SK-N-SH (cell line): ENCODE measurements at regions of chr19 and their contacts with region 1.

Region 1: DNA sequence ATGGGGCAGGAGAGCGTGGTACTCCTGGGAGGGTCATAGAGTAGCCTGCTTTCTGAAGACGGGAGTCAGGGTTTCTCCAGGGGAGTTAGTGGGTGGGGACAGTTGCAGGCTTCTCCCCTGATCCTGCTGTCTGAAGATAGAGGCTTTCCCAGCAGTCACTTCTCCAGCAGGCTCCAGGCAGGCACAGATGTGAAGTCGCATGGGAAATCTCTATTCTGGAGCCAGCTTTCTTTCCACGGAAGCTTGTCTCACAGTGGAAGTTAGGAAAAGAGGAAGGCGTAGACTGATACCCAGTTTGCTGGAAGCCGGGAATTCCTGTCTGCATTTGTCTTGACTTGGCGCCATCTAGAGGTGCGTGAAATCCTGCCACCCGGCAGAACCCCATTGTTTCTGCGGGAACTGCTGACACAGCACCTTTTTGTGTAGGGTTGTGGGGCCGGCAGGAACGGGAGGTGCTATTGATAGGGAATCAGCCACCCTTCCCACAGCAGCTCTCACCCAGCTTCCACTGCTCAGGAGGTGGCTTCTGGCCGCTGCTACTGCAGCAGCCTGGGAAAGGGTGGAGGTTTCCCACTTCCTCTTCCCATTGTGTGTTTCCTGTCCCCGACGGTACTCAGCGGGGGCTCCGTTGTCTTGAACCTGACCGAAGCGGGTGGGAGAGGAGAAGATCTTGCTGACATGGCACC is 28.5 kb upstream of the NPAS1 start:
- DNase-seq: peak; percentile 85
- H3K4me3 ChIP-seq: no peak overlapping the region; a peak in 1 of 4 replicates
- H3K27ac ChIP-seq: peak overlapping the region; percentile 32 to 34; a peak in 2 of 4 replicates
- H3K4me1 ChIP-seq: peaks cover 6 to 8% of the 10 kb centered on the region in 2 experiments; a peak in 3 of 4 replicates
- H3K27me3 ChIP-seq: no peaks in the 10 kb centered on the region
- CTCF ChIP-seq: peak; percentile 89
- EP300 ChIP-seq: no peak; a peak in 1 of 4 replicates
- RAD21 ChIP-seq: peak; percentile 96

Region 2: GRCh38 chr19:46850228-46851203 is 140.6 kb before region 1 on chr19 and contains the start of gene AP2S1:
- CTCF ChIA-PET with region 1: interaction called, 126 read pairs
- POLR2A ChIA-PET with region 1: no interaction called
- DNase-seq: peak; percentile 94
- H3K4me3 ChIP-seq: peak within 1 kb of the TSS; percentile 70 to 96
- H3K27ac ChIP-seq: peak within 1 kb of the TSS; percentile 86 to 96
- H3K4me1 ChIP-seq: peaks cover 0 to 11% of the 10 kb centered on the region in 2 experiments; a peak in 2 of 4 replicates
- H3K27me3 ChIP-seq: no peaks in the 10 kb centered on the region
- CTCF ChIP-seq: no peak
- EP300 ChIP-seq: no peak
- RAD21 ChIP-seq: no peak
- polyA plus RNA-seq, gene AP2S1: 380 and 565 TPM in 2 replicates

Region 3: GRCh38 chr19:46896076-46896794 is 94.9 kb before region 1 on chr19:
- CTCF ChIA-PET with region 1: interaction called, 11 read pairs
- POLR2A ChIA-PET with region 1: interaction called, 4 read pairs
- DNase-seq: no peak
- H3K4me3 ChIP-seq: no peak overlapping the region
- H3K27ac ChIP-seq: no peak overlapping the region
- H3K4me1 ChIP-seq: peaks cover 11 to 32% of the 10 kb centered on the region in 2 experiments; a peak in 3 of 4 replicates
- H3K27me3 ChIP-seq: no peaks in the 10 kb centered on the region
- CTCF ChIP-seq: no peak
- EP300 ChIP-seq: no peak
- RAD21 ChIP-seq: no peak

Region 4: DNA sequence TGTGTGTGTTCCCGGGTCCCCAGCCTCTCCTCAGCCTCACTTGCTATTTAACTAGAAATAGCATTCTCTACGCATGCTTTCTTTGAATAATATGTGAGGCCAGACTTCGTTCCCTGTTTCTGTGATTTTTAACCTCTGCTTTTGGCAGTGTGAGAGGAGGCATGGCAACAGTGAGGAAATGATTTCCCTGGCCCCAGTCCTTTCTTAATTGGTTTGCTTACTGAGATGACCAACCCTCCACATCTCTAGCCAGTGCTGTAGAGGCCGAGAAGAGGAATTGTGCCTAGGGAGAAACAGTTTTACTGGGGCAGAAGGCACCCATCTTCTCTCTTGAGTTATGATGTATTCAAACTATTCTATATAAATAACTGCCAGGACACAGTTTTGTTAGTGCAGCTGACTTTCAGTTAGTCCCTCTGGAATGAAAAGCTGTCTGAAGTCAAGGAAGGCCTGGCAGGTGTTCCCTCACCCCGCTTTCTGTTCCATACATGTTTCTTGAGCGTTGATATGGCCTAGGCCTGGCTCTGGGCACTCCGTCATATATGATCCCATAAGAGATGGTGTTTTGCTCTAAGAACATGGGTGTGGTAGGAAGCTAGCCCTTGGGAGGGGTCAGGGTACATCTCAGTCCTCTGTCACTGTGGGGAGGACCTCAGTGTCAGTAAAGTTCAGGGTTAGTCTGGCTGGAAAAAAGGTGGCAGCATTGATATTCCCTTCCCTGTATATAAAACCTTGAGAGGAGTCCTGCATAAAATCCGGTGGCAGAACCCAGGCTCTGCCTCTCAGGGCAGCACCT is 45.2 kb before region 1 on chr19:
- CTCF ChIA-PET with region 1: interaction called, 12 read pairs
- POLR2A ChIA-PET with region 1: no interaction called
- DNase-seq: no peak
- H3K4me3 ChIP-seq: no peak overlapping the region
- H3K27ac ChIP-seq: no peak overlapping the region; a peak in 1 of 4 replicates
- H3K4me1 ChIP-seq: peaks cover 10 to 14% of the 10 kb centered on the region in 2 experiments; a peak in 3 of 4 replicates
- H3K27me3 ChIP-seq: no peaks in the 10 kb centered on the region
- CTCF ChIP-seq: no peak
- EP300 ChIP-seq: no peak
- RAD21 ChIP-seq: no peak

Region 5: GRCh38 chr19:46975925-46976782 is 15.0 kb before region 1 on chr19:
- CTCF ChIA-PET with region 1: interaction called, 17 read pairs
- POLR2A ChIA-PET with region 1: no interaction called
- DNase-seq: peak; percentile 69
- H3K4me3 ChIP-seq: no peak overlapping the region
- H3K27ac ChIP-seq: peak overlapping the region; percentile 82 to 91
- H3K4me1 ChIP-seq: peaks cover 29 to 48% of the 10 kb centered on the region in 2 experiments
- H3K27me3 ChIP-seq: no peaks in the 10 kb centered on the region
- CTCF ChIP-seq: no peak
- EP300 ChIP-seq: no peak; a peak in 1 of 4 replicates
- RAD21 ChIP-seq: peak; percentile 5; the same call in 1 of the 2 replicates

Region 6: DNA sequence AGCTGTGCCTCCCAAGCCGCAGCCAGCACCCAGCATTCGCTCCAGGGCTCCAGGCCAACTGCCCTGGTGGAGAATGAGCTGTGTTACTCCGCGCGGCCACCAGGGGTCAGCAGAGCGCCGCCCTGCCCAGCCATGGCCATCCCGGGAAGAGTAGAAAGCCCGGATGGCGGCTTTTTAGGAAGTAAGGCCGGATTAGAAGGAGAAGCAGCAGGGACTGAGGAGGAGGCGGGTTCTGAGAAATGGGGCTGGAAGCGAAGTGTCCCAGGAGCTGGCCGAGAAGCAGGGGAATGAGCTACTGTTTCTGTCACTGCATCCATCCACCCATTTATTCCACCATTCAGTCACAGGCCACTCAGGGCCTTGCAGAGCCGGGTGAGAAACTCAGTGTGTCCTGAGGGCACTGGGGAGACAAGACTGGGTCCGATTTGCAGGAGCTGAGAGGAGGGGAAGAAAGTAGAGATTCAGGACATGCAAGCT is 21.9 kb after region 1 on chr19:
- CTCF ChIA-PET with region 1: interaction called, 22 read pairs
- POLR2A ChIA-PET with region 1: no interaction called
- DNase-seq: peak; percentile 92
- H3K4me3 ChIP-seq: no peak overlapping the region; a peak in 1 of 4 replicates
- H3K27ac ChIP-seq: no peak overlapping the region
- H3K4me1 ChIP-seq: peaks cover 0 to 3% of the 10 kb centered on the region in 2 experiments; a peak in 1 of 4 replicates
- H3K27me3 ChIP-seq: no peaks in the 10 kb centered on the region
- CTCF ChIP-seq: peak; percentile 95
- EP300 ChIP-seq: 0 out of 4 replicates have a peak, but pooled peaks of 1 of the 2 experiments have one; percentile 17
- RAD21 ChIP-seq: peak; percentile 93

Region 7: GRCh38 chr19:47047763-47048405 is 56.8 kb after region 1 on chr19:
- CTCF ChIA-PET with region 1: no interaction called
- POLR2A ChIA-PET with region 1: no interaction called
- DNase-seq: peak; percentile 98
- H3K4me3 ChIP-seq: peak overlapping the region; percentile 81 to 86
- H3K27ac ChIP-seq: peak overlapping the region in 1 of 2 experiments; percentile 70; a peak in 2 of 4 replicates
- H3K4me1 ChIP-seq: peaks cover 4 to 5% of the 10 kb centered on the region in 2 experiments; a peak in 2 of 4 replicates
- H3K27me3 ChIP-seq: no peaks in the 10 kb centered on the region
- CTCF ChIP-seq: no peak
- EP300 ChIP-seq: no peak
- RAD21 ChIP-seq: no peak